Heart left ventricle (tissue), 16 donors: ENCODE measurements at regions of chr20 and their contacts with region 1.

Region 1: DNA sequence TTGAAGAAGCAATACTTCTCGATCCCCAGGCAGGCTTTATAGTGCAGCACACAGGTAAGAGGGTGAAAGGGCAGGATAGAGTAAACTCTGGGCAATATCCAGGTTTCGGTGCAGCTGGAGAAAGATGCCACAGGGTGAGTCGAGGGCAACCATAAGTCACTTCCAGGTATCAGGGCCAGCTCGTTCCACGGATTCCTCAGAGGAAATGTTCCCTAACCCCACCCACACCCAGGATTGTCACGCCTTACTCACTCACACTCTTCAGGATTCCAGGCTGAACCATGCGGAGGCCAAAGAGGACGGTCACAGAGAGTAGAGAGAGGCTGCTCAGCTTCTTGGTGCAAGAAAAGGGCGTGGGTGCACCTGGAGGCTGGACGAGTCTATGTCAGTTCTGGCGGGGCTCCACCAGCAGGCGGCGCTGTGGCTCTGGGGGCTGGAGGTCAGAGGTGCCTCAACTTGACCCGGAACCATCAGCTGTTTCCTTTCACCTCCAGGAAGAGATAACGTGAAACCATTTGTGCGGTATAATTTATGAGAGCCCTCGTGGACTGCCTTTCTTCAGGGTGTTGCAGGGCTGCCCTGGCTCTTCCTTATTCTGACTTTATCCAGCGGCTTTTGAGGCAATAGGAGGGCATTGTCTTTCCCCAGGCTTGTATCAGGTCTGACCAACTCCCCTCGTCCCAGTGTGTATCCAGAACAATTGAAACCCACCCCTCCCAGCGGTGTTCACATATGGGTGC is 14.5 kb upstream of the WFDC12 start:
- DNase-seq: peak in 4 of 5 donors; percentile 32 to 79 (median 36)
- ATAC-seq: peak in 1 of 4 donors; percentile 34
- H3K4me3 ChIP-seq: no peak overlapping the region
- H3K27ac ChIP-seq: no peak overlapping the region
- H3K4me1 ChIP-seq: no peaks in the 10 kb centered on the region
- H3K27me3 ChIP-seq: peaks cover 0 to 24% (median 0%) of the 10 kb centered on the region in 9 donors
- CTCF ChIP-seq: peak in 8 of 12 donors; percentile 8 to 47 (median 28)
- POLR2A ChIP-seq: no peak

Region 2: DNA sequence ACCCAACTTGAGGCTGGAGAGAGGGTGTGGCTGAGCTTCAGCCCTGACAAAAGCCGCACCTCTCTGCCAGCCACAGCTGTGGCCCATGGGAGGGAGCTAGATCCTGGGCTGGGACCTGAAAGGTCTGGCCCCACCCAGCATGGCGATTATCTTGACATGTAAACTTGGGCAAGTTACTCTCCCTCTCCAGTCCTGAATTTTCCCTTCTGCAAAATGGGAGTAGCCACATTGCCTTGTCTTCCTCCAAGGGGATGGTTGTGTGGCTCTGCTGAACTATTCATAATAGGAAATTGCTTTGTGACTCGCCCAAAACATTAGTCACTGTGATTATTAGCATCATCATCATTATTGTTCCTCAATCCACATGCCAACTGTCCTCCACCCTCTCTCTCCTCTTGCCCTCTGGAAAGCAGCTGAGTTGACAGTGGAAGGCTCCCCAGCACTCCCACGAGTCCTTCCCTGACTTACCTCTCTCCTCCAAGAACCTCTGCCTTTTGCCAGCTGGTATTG is 144.9 kb after region 1 on chr20:
- intact Hi-C with region 1: loop called in 1 of 10 experiments (anchors 10 kb)
- DNase-seq: no peak
- ATAC-seq: no peak
- H3K4me3 ChIP-seq: no peak overlapping the region
- H3K27ac ChIP-seq: no peak overlapping the region
- H3K4me1 ChIP-seq: no peaks in the 10 kb centered on the region
- H3K27me3 ChIP-seq: peaks cover 0 to 39% (median 5%) of the 10 kb centered on the region in 9 donors
- CTCF ChIP-seq: no peak
- POLR2A ChIP-seq: no peak